GM12878 (cell line): ENCODE measurements at regions of chr3 and their contacts with region 1.

Region 1: DNA sequence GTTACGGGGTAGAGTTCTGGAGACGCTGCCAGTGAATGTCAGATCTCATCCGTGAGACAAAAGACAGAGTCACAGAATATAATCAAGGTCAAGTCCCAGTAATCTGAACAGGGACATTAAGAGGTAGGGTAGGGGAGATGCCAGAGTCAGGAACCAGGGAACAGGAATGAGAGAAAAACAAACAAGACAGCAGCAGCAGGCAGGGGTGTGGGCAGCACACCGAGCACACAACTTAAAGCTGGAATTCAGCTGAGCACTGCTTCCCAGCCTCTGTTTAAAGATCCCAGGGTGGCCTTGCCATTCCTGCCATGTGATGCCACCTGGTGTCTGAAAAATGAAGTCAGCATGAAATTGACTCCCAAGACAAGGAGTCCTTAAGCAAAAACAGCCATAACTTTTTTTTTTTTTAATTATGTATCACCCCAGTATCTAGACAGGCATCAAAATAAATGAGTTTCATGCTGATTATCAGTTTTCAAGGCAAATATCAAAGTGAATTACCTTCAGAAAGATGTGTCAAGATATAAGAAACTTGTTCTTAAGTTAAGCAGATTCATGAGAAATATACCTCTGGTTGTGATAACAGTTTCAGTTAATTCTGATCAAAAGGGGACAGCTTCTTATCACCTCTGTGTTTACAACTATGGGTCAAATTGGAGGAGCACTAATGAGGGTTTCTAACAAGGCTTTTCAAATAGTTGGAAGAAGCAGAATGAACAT is 203.7 kb downstream of the SLC9A9 start:
- DNase-seq: peak; percentile 26
- ATAC-seq: peak; percentile 76
- H3K4me3 ChIP-seq: no peak overlapping the region
- H3K27ac ChIP-seq: no peak overlapping the region
- H3K4me1 ChIP-seq: 0 out of 2 replicates have a peak, but pooled peaks cover 4% of the 10 kb centered on the region
- H3K27me3 ChIP-seq: no peaks in the 10 kb centered on the region
- CTCF ChIP-seq: peak; percentile 43 to 69 (median 51); a peak in 4 of 6 replicates
- EP300 ChIP-seq: no peak
- POLR2A ChIP-seq: no peak
- RAD21 ChIP-seq: peak; percentile 86

Region 2: GRCh38 chr3:143060906-143061305 is 583.6 kb before region 1 on chr3:
- CTCF ChIA-PET with region 1: interaction called, 3 read pairs
- POLR2A ChIA-PET with region 1: no interaction called
- RAD21 ChIA-PET with region 1: no interaction called
- SMC1A ChIA-PET with region 1: no interaction called
- in situ Hi-C with region 1: no loop called
- intact Hi-C with region 1: loop called (anchors 10 kb)
- DNase-seq: peak; percentile 57
- ATAC-seq: peak; percentile 97
- H3K4me3 ChIP-seq: no peak overlapping the region
- H3K27ac ChIP-seq: peak overlapping the region; percentile 77
- H3K4me1 ChIP-seq: peaks cover 10% of the 10 kb centered on the region
- H3K27me3 ChIP-seq: no peaks in the 10 kb centered on the region
- CTCF ChIP-seq: no peak
- EP300 ChIP-seq: peak in 1 of 2 experiments; percentile 72; a peak in 1 of 4 replicates
- POLR2A ChIP-seq: no peak
- RAD21 ChIP-seq: no peak

Region 3: GRCh38 chr3:143222505-143222904 is 422.0 kb before region 1 on chr3:
- CTCF ChIA-PET with region 1: no interaction called
- POLR2A ChIA-PET with region 1: no interaction called
- RAD21 ChIA-PET with region 1: no interaction called
- SMC1A ChIA-PET with region 1: no interaction called
- in situ Hi-C with region 1: no loop called
- intact Hi-C with region 1: loop called (anchors 10 kb)
- DNase-seq: no peak
- ATAC-seq: no peak
- H3K4me3 ChIP-seq: no peak overlapping the region
- H3K27ac ChIP-seq: no peak overlapping the region
- H3K4me1 ChIP-seq: peaks cover 2% of the 10 kb centered on the region
- H3K27me3 ChIP-seq: no peaks in the 10 kb centered on the region
- CTCF ChIP-seq: no peak
- EP300 ChIP-seq: no peak
- POLR2A ChIP-seq: no peak
- RAD21 ChIP-seq: no peak

Region 4: GRCh38 chr3:143326983-143327778 is 317.3 kb before region 1 on chr3:
- CTCF ChIA-PET with region 1: no interaction called
- POLR2A ChIA-PET with region 1: no interaction called
- RAD21 ChIA-PET with region 1: no interaction called
- SMC1A ChIA-PET with region 1: no interaction called
- in situ Hi-C with region 1: no loop called
- intact Hi-C with region 1: no loop called
- DNase-seq: no peak
- ATAC-seq: no peak
- H3K4me3 ChIP-seq: no peak overlapping the region
- H3K27ac ChIP-seq: no peak overlapping the region
- H3K4me1 ChIP-seq: no peaks in the 10 kb centered on the region
- H3K27me3 ChIP-seq: no peaks in the 10 kb centered on the region
- CTCF ChIP-seq: no peak; a peak in 1 of 6 replicates
- EP300 ChIP-seq: no peak
- POLR2A ChIP-seq: no peak
- RAD21 ChIP-seq: no peak

Region 5: DNA sequence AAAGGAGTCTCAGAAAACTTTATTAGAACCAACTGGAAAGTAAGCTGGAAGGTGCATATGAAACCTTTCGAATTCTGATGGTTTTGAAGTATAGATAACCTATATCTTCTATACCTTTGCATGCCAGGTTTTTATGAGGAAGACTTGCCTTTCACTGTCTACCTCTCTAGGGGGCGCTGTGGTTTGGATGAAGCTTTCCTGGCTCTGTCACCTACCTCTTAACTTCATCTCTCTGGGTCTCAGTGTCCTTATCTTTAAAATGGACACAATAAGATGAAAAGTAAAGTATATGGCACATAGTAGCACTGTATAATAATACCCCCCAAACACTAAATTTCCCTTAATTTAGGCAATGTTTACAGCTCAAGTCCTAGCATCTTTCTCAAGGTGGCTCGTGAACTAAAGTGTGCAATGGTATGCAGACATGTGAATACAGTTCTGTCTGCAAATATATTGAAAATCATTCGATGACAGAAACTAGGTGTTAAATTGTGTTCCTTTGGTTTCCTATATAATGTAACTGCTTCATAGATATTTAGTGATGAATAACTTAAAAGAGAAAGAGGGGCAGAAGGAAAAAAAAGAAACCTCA is 210.6 kb before region 1 on chr3:
- CTCF ChIA-PET with region 1: interaction called, 8 read pairs
- POLR2A ChIA-PET with region 1: no interaction called
- RAD21 ChIA-PET with region 1: no interaction called
- SMC1A ChIA-PET with region 1: interaction called, 7 read pairs
- in situ Hi-C with region 1: loop called (anchors 10 kb)
- intact Hi-C with region 1: loop called (anchors 1 kb)
- DNase-seq: no peak
- ATAC-seq: peak; percentile 70
- H3K4me3 ChIP-seq: no peak overlapping the region
- H3K27ac ChIP-seq: no peak overlapping the region
- H3K4me1 ChIP-seq: no peaks in the 10 kb centered on the region
- H3K27me3 ChIP-seq: no peaks in the 10 kb centered on the region
- CTCF ChIP-seq: peak; percentile 61 to 67 (median 63); a peak in 5 of 6 replicates
- EP300 ChIP-seq: no peak
- POLR2A ChIP-seq: no peak
- RAD21 ChIP-seq: peak; percentile 72